GM10248 (cell line): ENCODE measurements at regions of chr11 and their contacts with region 1.

Region 1: GRCh38 chr11:120400564-120401364 is 64.6 kb downstream of the ARHGEF12 start:
- DNase-seq: no peak
- CTCF ChIP-seq: no peak

Region 2: DNA sequence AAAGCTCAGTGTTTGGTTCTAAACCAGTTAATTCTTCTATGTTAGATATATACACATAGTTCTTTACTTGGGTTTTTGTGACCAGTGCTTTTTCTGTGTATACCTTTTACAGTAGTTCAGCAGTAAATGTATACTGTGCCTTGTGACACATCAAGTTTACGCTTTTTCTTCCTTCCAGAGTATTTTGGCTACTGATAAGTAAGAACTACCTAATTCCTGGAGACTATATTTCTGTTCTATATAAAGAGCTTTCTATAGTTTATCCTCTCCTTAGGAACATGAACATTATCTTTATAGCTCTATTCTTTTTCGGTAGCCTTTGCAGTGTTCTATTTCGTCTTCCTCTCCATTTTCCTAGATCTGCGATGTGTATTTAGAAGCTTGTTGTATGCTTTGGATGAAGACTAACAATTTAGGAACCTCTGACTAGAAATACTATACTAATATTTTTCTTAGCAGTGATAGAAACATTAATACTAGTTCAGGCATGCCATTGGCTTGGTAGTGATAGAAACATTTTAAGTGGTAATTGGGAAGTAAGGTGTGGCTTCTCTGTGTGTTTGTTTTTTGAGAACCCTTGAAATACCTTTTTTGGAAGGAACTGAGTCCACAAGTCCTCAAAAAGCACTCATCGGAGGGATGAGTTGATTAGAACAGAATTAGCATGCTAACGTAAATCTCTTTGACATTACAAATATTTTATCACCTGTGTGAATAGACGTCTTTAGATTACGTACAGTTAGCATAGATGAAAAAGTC is 10.0 kb after region 1 on chr11:
- CTCF ChIA-PET with region 1: interaction called, 14 read pairs
- POLR2A ChIA-PET with region 1: no interaction called
- DNase-seq: no peak
- CTCF ChIP-seq: no peak